ENCODE measurements at regions of chr19 and their contacts with region 1.

Region 1: GRCh38 chr19:45643024-45643926 is 4.1 kb upstream of the EML2 start:
- DNase-seq: peak; percentile 98
- H3K4me3 Mint-ChIP-seq: peak overlapping the region; percentile 65
- H3K27ac Mint-ChIP-seq: peak overlapping the region; percentile 99
- H3K4me1 Mint-ChIP-seq: peaks cover 46% of the 10 kb centered on the region
- H3K27me3 Mint-ChIP-seq: peaks cover 3% of the 10 kb centered on the region

Region 2: DNA sequence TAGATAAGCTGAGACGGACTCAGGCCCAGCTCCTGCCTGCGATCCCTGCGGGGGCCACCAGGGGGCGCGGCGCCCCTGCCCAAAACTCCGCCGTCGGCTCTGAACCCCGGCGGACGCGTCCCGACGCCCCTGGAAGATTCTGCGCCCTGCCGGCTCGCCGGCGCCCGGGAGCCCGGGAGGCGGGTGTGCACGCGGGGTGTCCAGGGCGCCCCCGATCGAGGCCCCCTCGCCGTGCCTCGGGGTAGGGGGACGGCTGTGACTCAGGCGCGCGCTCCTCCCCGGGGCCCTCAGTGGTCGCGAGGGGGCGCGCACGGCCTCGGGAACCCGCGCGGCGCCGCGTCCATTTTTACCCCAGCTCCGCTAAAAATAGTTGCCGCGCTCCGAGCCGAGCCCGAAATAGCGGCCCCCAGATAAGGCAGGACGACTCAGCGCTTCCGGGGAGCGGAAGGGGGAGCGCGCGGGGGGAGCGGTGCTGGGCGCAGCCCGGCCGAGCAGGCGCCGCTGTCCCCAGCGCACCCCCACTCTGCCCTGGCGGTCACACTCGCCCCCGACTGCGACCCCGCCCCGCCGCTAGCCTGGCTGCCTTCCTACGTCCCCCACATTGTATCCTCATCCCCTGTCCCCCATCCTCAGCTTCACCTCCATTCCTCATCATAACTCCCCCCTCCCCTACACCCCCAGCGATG is 203.6 kb before region 1 on chr19:
- CTCF ChIA-PET with region 1: interaction called, 9 read pairs
- intact Hi-C with region 1: loop called (anchors 10 kb)
- DNase-seq: peak; percentile 81
- H3K4me3 Mint-ChIP-seq: peak overlapping the region; percentile 58
- H3K27ac Mint-ChIP-seq: no peak overlapping the region
- H3K4me1 Mint-ChIP-seq: peaks cover 27% of the 10 kb centered on the region
- H3K27me3 Mint-ChIP-seq: no peaks in the 10 kb centered on the region

Region 3: GRCh38 chr19:45496349-45496953 is 146.8 kb before region 1 on chr19:
- CTCF ChIA-PET with region 1: interaction called, 8 read pairs
- intact Hi-C with region 1: loop called (anchors 2 kb)
- DNase-seq: peak; percentile 56
- H3K4me3 Mint-ChIP-seq: peak overlapping the region; percentile 55
- H3K27ac Mint-ChIP-seq: no peak overlapping the region
- H3K4me1 Mint-ChIP-seq: peaks cover 32% of the 10 kb centered on the region
- H3K27me3 Mint-ChIP-seq: peaks cover 27% of the 10 kb centered on the region

Region 4: GRCh38 chr19:45523642-45524256 is 119.5 kb before region 1 on chr19:
- CTCF ChIA-PET with region 1: interaction called, 7 read pairs
- intact Hi-C with region 1: loop called (anchors 1 kb)
- DNase-seq: peak; percentile 82
- H3K4me3 Mint-ChIP-seq: no peak overlapping the region
- H3K27ac Mint-ChIP-seq: peak overlapping the region; percentile 55
- H3K4me1 Mint-ChIP-seq: peaks cover 18% of the 10 kb centered on the region
- H3K27me3 Mint-ChIP-seq: no peaks in the 10 kb centered on the region

Region 5: DNA sequence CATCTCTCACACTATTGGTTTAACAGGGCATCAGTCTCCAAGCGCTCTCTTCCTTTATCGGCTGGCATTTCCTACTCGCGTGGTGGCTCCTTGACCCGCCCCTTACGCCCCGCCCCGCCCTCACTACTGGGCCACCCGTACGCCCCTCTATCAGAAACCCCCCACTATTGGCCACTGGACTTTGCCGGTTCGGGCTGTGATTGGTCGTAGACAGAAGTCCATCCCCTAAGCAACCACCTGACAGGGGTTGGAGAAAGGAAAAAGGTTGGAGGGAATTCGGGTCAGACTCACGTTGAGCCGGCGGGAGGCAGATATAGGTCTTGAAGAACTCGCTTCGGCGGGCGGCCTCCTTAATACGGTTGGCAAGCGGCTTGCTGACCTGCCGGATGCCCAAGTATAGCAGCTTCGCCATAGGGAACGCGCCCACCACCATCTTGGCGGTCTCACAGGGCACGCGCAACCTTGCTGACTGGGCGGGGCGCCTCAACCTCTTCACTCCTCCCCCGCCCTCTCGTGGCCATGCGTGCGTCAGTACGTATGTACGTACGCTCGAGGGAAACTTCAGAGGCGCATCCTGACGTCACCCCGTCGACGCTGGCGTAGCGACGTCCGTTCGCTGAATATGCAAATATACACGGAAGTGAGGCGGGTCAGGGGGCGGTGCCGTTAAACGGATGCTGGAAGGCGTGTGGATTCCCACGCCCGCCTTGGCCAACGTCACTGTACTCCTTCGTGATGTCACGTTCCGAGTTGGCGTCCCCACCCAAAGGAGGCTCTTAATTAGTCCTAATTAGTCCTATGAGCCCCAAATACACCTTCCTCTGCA is 58.7 kb before region 1 on chr19 and contains the start of gene OPA3:
- CTCF ChIA-PET with region 1: interaction called, 5 read pairs
- intact Hi-C with region 1: loop called (anchors 1 kb)
- DNase-seq: peak; percentile 100
- H3K4me3 Mint-ChIP-seq: peak within 1 kb of the TSS; percentile 89
- H3K27ac Mint-ChIP-seq: peak within 1 kb of the TSS; percentile 98
- H3K4me1 Mint-ChIP-seq: peaks cover 14% of the 10 kb centered on the region
- H3K27me3 Mint-ChIP-seq: peaks cover 3% of the 10 kb centered on the region
- total RNA-seq, gene OPA3: 12.4 to 12.7 TPM

Region 6: DNA sequence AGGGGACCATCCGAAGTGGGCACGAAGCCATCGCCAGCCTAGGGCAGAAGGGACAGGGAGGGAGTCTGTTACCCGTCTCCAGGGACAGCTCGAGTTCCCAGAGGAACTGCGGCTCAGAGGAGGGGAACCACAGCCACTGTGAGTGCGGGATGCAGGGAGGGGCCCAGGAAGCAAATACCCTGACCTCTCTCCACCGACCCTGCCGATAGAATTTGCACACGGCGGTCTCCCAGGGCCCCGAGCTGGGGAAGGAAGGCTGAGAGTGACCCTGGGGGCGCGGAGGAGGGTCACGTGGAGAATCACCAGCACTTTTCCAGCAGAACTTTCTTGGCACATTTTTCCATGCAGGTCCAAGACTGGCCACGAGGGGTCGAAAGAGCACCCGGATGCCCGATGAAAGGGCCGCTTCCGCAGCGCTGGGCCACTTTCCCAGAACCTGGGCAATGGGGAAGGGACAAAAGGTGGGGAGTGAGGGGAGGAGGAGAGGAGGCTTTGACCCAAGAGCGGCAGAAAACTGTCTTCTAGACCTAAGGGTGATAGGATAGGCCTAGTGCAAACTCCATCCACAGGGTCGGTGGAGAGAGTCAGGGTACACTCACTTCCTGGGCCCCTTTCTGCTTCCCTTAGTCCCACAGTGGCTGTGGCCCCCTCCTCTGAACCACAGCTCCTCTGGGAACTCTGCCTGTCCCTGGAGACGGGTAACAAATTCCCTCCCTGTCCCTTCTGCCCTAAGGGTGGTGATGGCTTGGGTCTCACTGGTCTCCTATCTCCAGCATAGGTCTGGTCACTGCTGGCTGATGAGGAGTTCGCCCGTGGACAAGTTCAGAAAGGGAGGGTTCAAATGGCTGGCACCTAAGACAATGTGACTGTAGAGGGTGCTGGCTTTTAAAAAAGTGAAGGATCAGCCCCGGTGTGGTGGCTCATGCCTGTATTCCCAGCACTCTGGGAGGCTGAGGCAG is 35.9 kb before region 1 on chr19:
- CTCF ChIA-PET with region 1: interaction called, 27 read pairs
- intact Hi-C with region 1: loop called (anchors 1 kb)
- DNase-seq: peak; percentile 65
- H3K4me3 Mint-ChIP-seq: no peak overlapping the region
- H3K27ac Mint-ChIP-seq: peak overlapping the region; percentile 83
- H3K4me1 Mint-ChIP-seq: peaks cover 15% of the 10 kb centered on the region
- H3K27me3 Mint-ChIP-seq: peaks cover 9% of the 10 kb centered on the region

Region 7: DNA sequence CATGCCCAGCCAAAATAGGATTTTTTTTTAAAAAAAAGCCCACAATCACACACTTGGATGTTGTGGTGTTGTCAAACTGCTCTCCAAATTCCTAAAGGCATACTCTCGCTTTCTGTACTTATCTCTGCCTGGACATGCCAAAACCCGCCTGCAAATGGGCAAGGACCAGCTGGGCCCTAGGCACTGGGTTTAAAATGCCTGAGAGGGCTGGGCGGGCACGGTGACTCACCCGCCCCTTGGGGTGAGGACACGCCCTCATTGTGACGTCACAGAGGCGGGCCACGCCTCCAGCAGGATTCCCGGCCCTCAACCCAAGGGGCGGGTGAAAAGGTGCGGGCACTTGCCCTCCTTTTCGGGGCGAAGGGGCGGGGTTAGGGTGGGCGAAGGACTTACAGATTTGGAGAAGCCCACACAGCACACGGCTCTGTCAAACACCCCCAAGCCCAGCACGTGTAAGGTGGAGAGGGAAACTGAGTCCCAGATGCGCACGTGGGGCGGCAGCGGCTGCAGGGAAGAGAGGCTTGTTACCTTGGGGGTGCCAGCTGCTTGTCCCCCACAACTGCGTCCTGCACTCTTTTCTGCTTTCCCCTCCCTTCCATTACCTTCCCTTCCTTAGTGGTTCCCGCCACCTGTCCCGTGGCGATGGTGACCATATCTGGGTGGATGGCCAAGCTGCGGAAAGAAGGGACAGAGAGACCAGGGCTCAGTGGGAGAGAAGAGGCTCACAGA is 10.6 kb before region 1 on chr19:
- CTCF ChIA-PET with region 1: interaction called, 38 read pairs
- intact Hi-C with region 1: loop called (anchors 1 kb)
- DNase-seq: peak; percentile 69
- H3K4me3 Mint-ChIP-seq: peak overlapping the region; percentile 21
- H3K27ac Mint-ChIP-seq: peak overlapping the region; percentile 87
- H3K4me1 Mint-ChIP-seq: peaks cover 20% of the 10 kb centered on the region
- H3K27me3 Mint-ChIP-seq: no peaks in the 10 kb centered on the region

Region 8: GRCh38 chr19:45824531-45825262 is 181.4 kb after region 1 on chr19:
- CTCF ChIA-PET with region 1: no interaction called
- intact Hi-C with region 1: no loop called
- DNase-seq: no peak
- H3K4me3 Mint-ChIP-seq: no peak overlapping the region
- H3K27ac Mint-ChIP-seq: peak overlapping the region; percentile 4
- H3K4me1 Mint-ChIP-seq: peaks cover 5% of the 10 kb centered on the region
- H3K27me3 Mint-ChIP-seq: no peaks in the 10 kb centered on the region